Activated B cell treated with CpG ODN at 0.5 μM for 24 hours (primary cell): ENCODE measurements at regions of chr3 and their contacts with region 1.

Region 1: GRCh38 chr3:146589899-146590508 is 15.1 kb downstream of the PLSCR5 start:
- DNase-seq: no peak
- ATAC-seq: no peak
- H3K4me3 Mint-ChIP-seq: no peak overlapping the region
- H3K27ac Mint-ChIP-seq: no peak overlapping the region
- H3K4me1 Mint-ChIP-seq: no peaks in the 10 kb centered on the region
- H3K27me3 Mint-ChIP-seq: peaks cover 5% of the 10 kb centered on the region
- CTCF ChIP-seq: no peak

Region 2: GRCh38 chr3:146065573-146066006 is 524.4 kb before region 1 on chr3:
- CTCF ChIA-PET with region 1: interaction called, 3 read pairs
- POLR2A ChIA-PET with region 1: no interaction called
- intact Hi-C with region 1: loop called (anchors 5 kb)
- DNase-seq: no peak
- ATAC-seq: no peak
- H3K4me3 Mint-ChIP-seq: no peak overlapping the region
- H3K27ac Mint-ChIP-seq: no peak overlapping the region
- H3K4me1 Mint-ChIP-seq: no peaks in the 10 kb centered on the region
- H3K27me3 Mint-ChIP-seq: no peaks in the 10 kb centered on the region
- CTCF ChIP-seq: peak; percentile 91

Region 3: DNA sequence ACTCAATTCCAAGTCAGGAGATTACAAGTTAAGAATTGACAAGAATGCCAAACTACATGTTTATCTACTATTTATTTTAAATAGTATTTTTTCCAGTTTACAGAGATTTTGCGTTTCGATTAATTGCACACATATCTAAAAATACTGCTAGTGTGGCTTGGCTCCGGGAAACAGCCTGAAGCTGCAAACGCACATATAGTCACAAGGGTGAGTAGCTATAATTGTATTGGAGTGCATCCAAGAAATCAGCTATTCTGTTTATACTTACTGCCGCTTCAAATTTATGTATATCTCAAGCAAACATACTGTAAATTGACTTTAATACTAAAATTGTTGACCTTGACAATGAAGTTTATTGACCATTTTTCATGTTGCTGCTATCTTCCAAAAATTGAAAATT is 92.2 kb after region 1 on chr3:
- CTCF ChIA-PET with region 1: no interaction called
- POLR2A ChIA-PET with region 1: no interaction called
- intact Hi-C with region 1: no loop called
- DNase-seq: no peak
- ATAC-seq: no peak
- H3K4me3 Mint-ChIP-seq: no peak overlapping the region
- H3K27ac Mint-ChIP-seq: no peak overlapping the region
- H3K4me1 Mint-ChIP-seq: no peaks in the 10 kb centered on the region
- H3K27me3 Mint-ChIP-seq: no peaks in the 10 kb centered on the region
- CTCF ChIP-seq: no peak

Region 4: DNA sequence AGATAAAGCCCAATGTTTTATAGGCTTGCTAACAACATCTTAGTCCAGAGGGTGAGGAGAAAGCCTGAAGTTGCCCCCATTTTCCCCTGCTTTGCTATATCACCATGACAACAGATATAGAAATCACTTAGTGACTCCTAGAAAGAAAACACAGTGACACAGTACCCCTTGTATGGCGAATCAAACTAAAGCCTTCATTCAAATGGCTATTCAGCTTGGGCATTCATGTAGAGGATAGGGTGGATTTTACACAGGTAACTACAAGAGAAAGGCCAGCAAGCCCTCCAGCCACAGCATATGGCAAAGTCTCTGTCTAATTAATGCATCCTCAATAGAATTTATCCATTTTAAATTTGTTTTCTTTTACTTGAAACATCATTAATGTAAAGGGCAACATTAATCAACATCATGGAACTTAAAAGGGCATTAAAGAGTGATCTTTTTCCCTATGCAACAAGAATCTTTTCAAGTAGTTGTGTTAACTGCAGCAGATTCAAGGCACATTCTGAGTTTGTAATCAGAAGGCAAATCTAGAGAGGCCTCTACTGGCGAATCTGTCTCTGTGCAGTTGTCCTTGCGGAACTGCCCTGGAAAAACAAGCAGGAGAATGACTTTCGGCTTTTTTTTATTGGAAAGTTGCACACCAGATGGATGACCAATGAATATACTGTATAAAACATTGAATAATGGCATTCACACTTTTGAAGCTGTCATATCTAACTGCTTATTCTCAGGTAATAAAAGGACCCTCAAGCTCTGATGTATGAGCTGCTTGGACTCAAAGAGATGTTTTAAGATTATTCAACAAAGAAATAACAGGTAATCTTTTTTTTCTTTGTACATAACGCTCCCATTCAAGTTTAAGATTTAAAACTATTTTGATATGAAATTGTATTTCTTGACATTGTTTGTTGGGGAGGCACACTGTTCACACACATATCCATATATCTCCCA is 1486.0 kb after region 1 on chr3:
- CTCF ChIA-PET with region 1: no interaction called
- POLR2A ChIA-PET with region 1: no interaction called
- intact Hi-C with region 1: loop called (anchors 5 kb)
- DNase-seq: no peak
- ATAC-seq: no peak
- H3K4me3 Mint-ChIP-seq: no peak overlapping the region
- H3K27ac Mint-ChIP-seq: no peak overlapping the region
- H3K4me1 Mint-ChIP-seq: no peaks in the 10 kb centered on the region
- H3K27me3 Mint-ChIP-seq: no peaks in the 10 kb centered on the region
- CTCF ChIP-seq: no peak